ENCODE measurements at regions of chr9 and their contacts with region 1.

Region 1: GRCh38 chr9:73023025-73023541 is 70.2 kb upstream of the ALDH1A1 start:
- DNase-seq: peak in 5 of 9 donors; percentile 5 to 27 (median 19)
- ATAC-seq: peak; percentile 55
- H3K4me3 ChIP-seq: no peak overlapping the region
- H3K4me3 Mint-ChIP-seq: no peak overlapping the region
- H3K27ac ChIP-seq: no peak overlapping the region
- H3K27ac Mint-ChIP-seq: no peak overlapping the region
- H3K4me1 ChIP-seq: no peaks in the 10 kb centered on the region
- H3K4me1 Mint-ChIP-seq: peaks cover 0 to 10% (median 7%) of the 10 kb centered on the region in 7 donors
- H3K27me3 ChIP-seq: no peaks in the 10 kb centered on the region
- H3K27me3 Mint-ChIP-seq: peaks cover 16 to 36% (median 26%) of the 10 kb centered on the region in 5 donors

Region 2: GRCh38 chr9:72038890-72039410 is 984.1 kb before region 1 on chr9:
- CTCF ChIA-PET with region 1: interaction called, 3 read pairs
- POLR2A ChIA-PET with region 1: no interaction called
- intact Hi-C with region 1: loop called in 1 of 2 experiments (anchors 1 kb)
- DNase-seq: peak; percentile 15 to 59 (median 41)
- ATAC-seq: peak; percentile 76
- H3K4me3 ChIP-seq: no peak overlapping the region
- H3K4me3 Mint-ChIP-seq: peak overlapping the region in 1 of 10 donors; percentile 66
- H3K27ac ChIP-seq: no peak overlapping the region
- H3K27ac Mint-ChIP-seq: no peak overlapping the region
- H3K4me1 ChIP-seq: peaks cover 0 to 3% of the 10 kb centered on the region in 2 donors
- H3K4me1 Mint-ChIP-seq: peaks cover 0 to 7% (median 4%) of the 10 kb centered on the region in 7 donors
- H3K27me3 ChIP-seq: no peaks in the 10 kb centered on the region
- H3K27me3 Mint-ChIP-seq: peaks cover 4 to 22% (median 6%) of the 10 kb centered on the region in 5 donors

Region 3: DNA sequence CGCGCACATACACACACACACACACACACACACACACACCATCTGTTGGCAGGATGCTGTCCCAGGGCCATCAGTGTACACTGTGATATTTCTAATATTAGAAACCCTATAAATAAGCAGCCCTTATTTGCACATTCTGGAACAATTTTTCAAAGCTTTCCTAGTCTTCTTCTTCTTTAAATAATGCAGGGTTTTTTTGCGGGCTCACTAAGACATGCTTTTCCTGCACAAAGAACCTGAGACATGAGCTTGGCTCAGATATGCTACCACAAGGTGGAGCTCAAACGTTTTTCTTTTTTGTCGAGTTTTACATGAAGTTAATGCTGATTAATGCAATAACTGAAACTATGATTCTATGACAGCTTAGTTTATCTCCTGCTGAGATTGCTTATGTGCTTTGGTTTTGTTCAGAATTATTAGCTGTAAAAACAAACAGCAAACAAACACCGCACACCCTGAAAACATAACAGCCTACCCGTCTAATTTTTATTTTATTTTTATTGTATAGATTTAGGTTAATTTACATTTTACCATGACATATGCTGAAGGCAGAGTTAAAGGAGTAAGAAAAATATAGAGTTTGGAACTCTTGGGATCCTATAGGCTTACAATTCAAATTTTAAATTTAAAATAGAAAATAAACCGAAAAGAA is 166.0 kb before region 1 on chr9:
- CTCF ChIA-PET with region 1: interaction called, 3 read pairs
- POLR2A ChIA-PET with region 1: no interaction called
- intact Hi-C with region 1: loop called (anchors 1 to 2 kb)
- DNase-seq: peak in 1 of 9 donors; percentile 4
- ATAC-seq: peak; percentile 45
- H3K4me3 ChIP-seq: no peak overlapping the region
- H3K4me3 Mint-ChIP-seq: no peak overlapping the region
- H3K27ac ChIP-seq: no peak overlapping the region
- H3K27ac Mint-ChIP-seq: no peak overlapping the region
- H3K4me1 ChIP-seq: no peaks in the 10 kb centered on the region
- H3K4me1 Mint-ChIP-seq: peaks cover 0 to 5% (median 0%) of the 10 kb centered on the region in 7 donors
- H3K27me3 ChIP-seq: no peaks in the 10 kb centered on the region
- H3K27me3 Mint-ChIP-seq: peaks cover 0 to 5% (median 0%) of the 10 kb centered on the region in 5 donors

Region 4: GRCh38 chr9:72871685-72872084 is 151.4 kb before region 1 on chr9:
- CTCF ChIA-PET with region 1: interaction called, 3 read pairs
- POLR2A ChIA-PET with region 1: no interaction called
- intact Hi-C with region 1: loop called in 1 of 2 experiments (anchors 5 kb)
- DNase-seq: no peak
- ATAC-seq: no peak
- H3K4me3 ChIP-seq: no peak overlapping the region
- H3K4me3 Mint-ChIP-seq: no peak overlapping the region
- H3K27ac ChIP-seq: no peak overlapping the region
- H3K27ac Mint-ChIP-seq: no peak overlapping the region
- H3K4me1 ChIP-seq: no peaks in the 10 kb centered on the region
- H3K4me1 Mint-ChIP-seq: no peaks in the 10 kb centered on the region
- H3K27me3 ChIP-seq: no peaks in the 10 kb centered on the region
- H3K27me3 Mint-ChIP-seq: peaks cover 3 to 30% (median 16%) of the 10 kb centered on the region in 5 donors

Region 5: DNA sequence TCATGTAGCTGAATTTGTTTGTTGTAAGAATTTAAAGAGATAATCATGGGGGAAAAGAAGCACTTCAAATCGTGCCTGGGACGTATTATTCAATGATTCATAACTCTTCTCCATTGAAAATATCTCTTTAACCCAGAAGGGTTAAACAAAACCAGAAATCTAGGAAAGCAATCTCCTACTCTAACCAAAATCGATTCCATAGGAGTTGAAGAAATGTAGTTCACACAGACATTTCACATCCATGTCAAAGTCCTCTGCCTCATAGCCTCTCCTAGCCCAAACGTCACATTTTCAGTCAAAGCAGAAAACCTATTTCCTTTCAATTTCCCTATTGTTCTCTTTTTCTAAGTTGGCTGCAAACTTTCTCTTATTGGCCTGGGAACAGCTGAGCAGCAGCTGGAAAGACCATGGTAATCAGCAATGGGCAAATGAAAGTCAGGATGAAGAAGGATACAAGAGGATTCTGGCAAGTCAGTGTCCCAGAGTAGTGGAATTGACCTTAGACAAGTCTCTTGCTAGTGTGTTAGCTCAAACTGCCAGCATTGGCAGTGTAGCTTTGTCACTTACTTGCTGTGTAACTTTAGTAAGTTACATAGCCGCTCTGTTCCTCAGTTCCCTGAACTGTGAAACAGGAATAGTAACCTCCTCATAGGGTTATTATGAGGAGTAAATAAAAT is 74.0 kb before region 1 on chr9:
- CTCF ChIA-PET with region 1: no interaction called
- POLR2A ChIA-PET with region 1: no interaction called
- intact Hi-C with region 1: no loop called
- DNase-seq: no peak
- ATAC-seq: no peak
- H3K4me3 ChIP-seq: no peak overlapping the region
- H3K4me3 Mint-ChIP-seq: no peak overlapping the region
- H3K27ac ChIP-seq: no peak overlapping the region
- H3K27ac Mint-ChIP-seq: no peak overlapping the region
- H3K4me1 ChIP-seq: peaks cover 0 to 6% of the 10 kb centered on the region in 2 donors
- H3K4me1 Mint-ChIP-seq: peaks cover 0 to 17% (median 5%) of the 10 kb centered on the region in 7 donors
- H3K27me3 ChIP-seq: peaks cover 0 to 3% of the 10 kb centered on the region in 2 donors
- H3K27me3 Mint-ChIP-seq: peaks cover 14 to 42% (median 30%) of the 10 kb centered on the region in 5 donors

Region 6: GRCh38 chr9:72971411-72971810 is 51.7 kb before region 1 on chr9:
- CTCF ChIA-PET with region 1: no interaction called
- POLR2A ChIA-PET with region 1: no interaction called
- intact Hi-C with region 1: no loop called
- DNase-seq: no peak
- ATAC-seq: no peak
- H3K4me3 ChIP-seq: no peak overlapping the region
- H3K4me3 Mint-ChIP-seq: no peak overlapping the region
- H3K27ac ChIP-seq: no peak overlapping the region
- H3K27ac Mint-ChIP-seq: no peak overlapping the region
- H3K4me1 ChIP-seq: no peaks in the 10 kb centered on the region
- H3K4me1 Mint-ChIP-seq: no peaks in the 10 kb centered on the region
- H3K27me3 ChIP-seq: no peaks in the 10 kb centered on the region
- H3K27me3 Mint-ChIP-seq: peaks cover 0 to 23% (median 5%) of the 10 kb centered on the region in 5 donors